Left cardiac atrium (tissue), 4 donors: ENCODE measurements at regions of chr1 and their contacts with region 1.

Region 1: DNA sequence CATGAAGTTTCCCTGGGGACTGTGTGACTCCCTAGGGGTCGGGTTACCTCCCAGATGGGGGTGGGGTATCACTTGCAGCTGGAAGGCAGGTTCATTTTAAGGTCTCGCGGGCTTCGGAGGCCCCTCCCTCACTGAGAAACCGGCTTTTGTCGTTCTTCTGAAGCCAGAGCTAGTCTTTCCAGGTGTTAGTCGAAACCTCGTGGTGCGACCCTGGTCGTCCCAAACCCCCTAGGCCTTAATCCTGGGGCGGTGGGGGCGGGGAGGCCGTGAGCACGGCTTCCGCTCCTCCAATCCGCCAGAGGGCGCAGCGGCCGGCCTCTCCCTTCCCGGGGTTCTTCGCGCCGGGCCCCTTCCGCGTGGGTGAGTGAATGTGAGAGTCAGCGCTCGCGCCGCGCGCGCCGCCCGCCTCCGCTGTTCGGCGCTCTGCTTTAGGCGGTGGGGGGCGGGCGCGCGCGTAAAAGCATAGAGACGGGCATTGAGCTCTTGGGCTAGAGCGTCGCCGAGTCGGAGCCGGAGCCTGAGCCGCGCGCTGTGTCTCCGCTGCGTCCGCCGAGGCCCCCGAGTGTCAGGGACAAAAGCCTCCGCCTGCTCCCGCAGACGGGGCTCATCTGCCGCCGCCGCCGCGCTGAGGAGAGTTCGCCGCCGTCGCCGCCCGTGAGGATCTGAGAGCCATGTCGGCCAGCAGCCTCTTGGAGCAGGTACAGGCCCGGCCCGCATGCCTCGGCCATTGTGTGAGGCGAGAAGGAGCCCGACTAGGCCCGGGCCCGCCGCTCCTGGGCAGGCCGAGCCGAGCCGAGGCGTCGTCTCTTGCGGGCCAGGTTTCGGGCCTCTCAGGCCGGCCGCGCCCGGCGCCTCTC is at the start of gene YTHDF2:
- DNase-seq: peak; percentile 99
- ATAC-seq: peak; percentile 99
- total RNA-seq, gene YTHDF2: 30.0 to 44.4 TPM

Region 2: GRCh38 chr1:28642847-28643635 is 93.6 kb before region 1 on chr1 and contains the start of gene TAF12:
- intact Hi-C with region 1: loop called in 1 of 2 experiments (anchors 2 kb)
- DNase-seq: peak; percentile 92
- ATAC-seq: peak; percentile 95 to 96
- total RNA-seq, gene TAF12: 15.6 to 19.1 TPM